PC-9 (cell line): ENCODE measurements at regions of chr7 and their contacts with region 1.

Region 1: DNA sequence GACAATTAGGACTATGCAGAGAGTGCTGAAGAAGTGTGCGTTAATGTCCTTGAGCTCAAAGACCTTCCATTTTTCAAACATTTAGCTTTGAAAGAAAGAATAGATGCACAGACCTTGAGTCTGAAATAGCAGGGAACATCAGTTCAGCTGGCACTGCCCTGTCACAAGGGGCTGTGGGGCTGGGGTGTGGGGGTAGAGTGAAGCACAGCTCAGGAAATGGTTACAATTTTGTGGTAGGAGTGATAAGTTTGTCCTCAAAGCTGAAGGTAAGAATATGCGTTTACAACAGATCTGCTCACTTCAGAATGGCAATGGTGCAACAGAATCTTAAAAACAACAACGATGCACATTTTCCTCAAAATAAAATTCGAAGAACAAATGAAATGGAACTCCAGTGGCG is 33.6 kb downstream of the SMKR1 start:
- DNase-seq: no peak
- H3K4me3 ChIP-seq: no peak overlapping the region
- H3K27ac ChIP-seq: no peak overlapping the region
- H3K4me1 ChIP-seq: peaks cover 12% of the 10 kb centered on the region
- H3K27me3 ChIP-seq: no peaks in the 10 kb centered on the region
- CTCF ChIP-seq: no peak

Region 2: DNA sequence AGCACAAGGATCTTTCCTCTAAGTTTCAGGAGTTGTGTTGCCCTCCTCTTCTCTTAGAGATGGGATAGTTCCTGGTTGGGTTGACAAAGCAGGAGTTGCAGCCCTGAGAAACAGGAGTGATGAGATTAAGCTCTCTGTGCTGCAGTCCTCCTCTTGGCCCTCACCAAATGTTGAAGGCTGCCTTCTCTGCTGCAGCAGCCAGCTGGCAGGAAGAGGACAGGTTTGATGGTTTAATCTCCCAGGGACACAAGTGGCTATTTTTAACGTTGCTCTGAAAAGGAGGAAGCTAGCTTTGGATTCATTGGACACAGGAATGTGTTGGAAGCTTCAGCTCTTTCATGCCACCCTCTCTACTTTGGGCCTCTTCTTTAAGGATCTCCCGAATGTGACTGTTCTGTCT is 92.3 kb before region 1 on chr7:
- CTCF ChIA-PET with region 1: no interaction called
- POLR2A ChIA-PET with region 1: no interaction called
- intact Hi-C with region 1: no loop called
- DNase-seq: no peak
- H3K4me3 ChIP-seq: no peak overlapping the region
- H3K27ac ChIP-seq: no peak overlapping the region
- H3K4me1 ChIP-seq: peaks cover 18% of the 10 kb centered on the region
- H3K27me3 ChIP-seq: no peaks in the 10 kb centered on the region
- CTCF ChIP-seq: no peak

Region 3: DNA sequence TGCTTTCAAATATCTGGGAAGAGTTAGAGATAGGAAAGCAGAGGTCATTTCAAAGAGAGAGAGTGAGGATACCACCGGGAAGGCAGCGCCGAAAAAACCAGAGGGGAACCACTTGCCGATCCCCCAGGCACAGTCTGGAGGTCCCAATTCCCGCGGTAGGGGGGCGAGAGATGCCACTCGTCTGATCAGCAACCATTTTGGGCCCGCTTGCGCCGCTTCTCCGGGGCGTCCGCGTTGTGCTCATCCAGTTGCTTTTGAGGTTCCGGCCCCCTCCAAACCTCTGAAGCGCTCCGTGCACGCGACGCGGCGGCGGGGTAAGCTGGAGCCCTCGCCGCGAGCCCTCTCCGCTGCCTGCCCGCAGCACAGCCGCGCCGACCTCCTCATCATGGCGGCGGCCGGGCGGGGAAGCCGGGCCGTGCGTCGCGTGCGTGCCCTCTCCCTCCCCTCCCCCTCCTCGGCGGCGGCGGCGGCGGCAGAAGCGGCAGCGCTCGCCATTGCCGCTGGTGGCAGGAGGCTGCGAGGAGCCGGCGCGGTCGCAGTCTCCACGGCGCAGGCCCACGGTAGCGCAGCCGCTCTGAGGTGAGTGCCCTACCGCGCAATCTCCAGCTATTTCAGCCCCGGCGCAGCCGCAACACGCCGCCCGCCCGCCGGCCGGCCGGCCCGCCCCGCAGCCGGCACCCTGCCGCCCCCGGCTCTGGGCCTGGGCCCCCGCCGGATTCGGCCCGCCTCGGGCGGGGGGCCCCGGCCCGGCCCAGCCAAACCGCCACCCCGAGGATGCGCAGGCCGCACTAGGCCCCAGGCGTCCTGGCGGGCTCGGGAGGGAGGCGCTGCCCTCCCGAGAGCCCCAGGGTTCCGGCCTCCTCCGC is 75.6 kb after region 1 on chr7 and contains the start of gene NRF1:
- CTCF ChIA-PET with region 1: interaction called, 20 read pairs
- POLR2A ChIA-PET with region 1: interaction called, 12 read pairs
- intact Hi-C with region 1: loop called (anchors 1 kb)
- DNase-seq: peak; percentile 67 to 94
- H3K4me3 ChIP-seq: peak within 1 kb of the TSS; percentile 96
- H3K27ac ChIP-seq: peak within 1 kb of the TSS; percentile 75
- H3K4me1 ChIP-seq: peaks cover 29% of the 10 kb centered on the region
- H3K27me3 ChIP-seq: no peaks in the 10 kb centered on the region
- CTCF ChIP-seq: no peak
- total RNA-seq, gene NRF1: 20.5 and 23.2 TPM in 2 replicates